Heart left ventricle (tissue), 16 donors: ENCODE measurements at regions of chr2 and their contacts with region 1.

Region 1: GRCh38 chr2:32010670-32011484 is at the start of gene MEMO1:
- DNase-seq: peak; percentile 95 to 97 (median 96)
- ATAC-seq: peak; percentile 90 to 94 (median 92)
- H3K4me3 ChIP-seq: peak within 1 kb of the TSS; percentile 28 to 98 (median 88)
- H3K27ac ChIP-seq: peak within 1 kb of the TSS; percentile 90 to 99 (median 94)
- H3K4me1 ChIP-seq: peaks cover 0 to 47% (median 26%) of the 10 kb centered on the region in 12 donors
- H3K27me3 ChIP-seq: no peaks in the 10 kb centered on the region
- CTCF ChIP-seq: no peak
- POLR2A ChIP-seq: peak in 1 of 2 donors; percentile 73
- total RNA-seq, gene MEMO1: 20.1 to 73.3 (median 53.0) TPM

Region 2: DNA sequence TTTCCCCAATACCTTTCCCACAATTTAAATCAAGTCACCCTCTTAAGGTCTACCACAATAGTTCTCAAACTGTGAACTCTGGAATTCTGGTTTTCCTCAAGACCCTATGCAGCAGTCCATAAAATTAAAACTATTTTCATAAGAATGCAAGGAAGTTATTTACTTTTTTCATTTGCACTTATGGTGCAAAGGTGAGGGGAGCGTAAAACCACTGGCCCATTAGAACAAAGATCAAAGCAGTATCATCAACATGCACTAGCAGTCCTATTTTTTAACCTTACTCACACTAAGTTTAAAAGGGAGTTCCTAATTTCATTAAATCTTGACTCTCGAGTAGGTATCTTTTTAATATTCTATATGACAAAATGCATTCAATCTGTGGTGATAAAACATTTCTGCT is 85.4 kb before region 1 on chr2:
- intact Hi-C with region 1: loop called in 1 of 10 experiments (anchors 5 kb)
- DNase-seq: no peak
- ATAC-seq: no peak
- H3K4me3 ChIP-seq: no peak overlapping the region
- H3K27ac ChIP-seq: no peak overlapping the region
- H3K4me1 ChIP-seq: peaks cover 0 to 7% (median 0%) of the 10 kb centered on the region in 12 donors
- H3K27me3 ChIP-seq: no peaks in the 10 kb centered on the region
- CTCF ChIP-seq: no peak
- POLR2A ChIP-seq: no peak

Region 3: GRCh38 chr2:31965094-31965493 is 45.8 kb before region 1 on chr2:
- intact Hi-C with region 1: no loop called
- DNase-seq: no peak
- ATAC-seq: no peak
- H3K4me3 ChIP-seq: no peak overlapping the region
- H3K27ac ChIP-seq: no peak overlapping the region
- H3K4me1 ChIP-seq: peaks cover 0 to 40% (median 5%) of the 10 kb centered on the region in 12 donors
- H3K27me3 ChIP-seq: no peaks in the 10 kb centered on the region
- CTCF ChIP-seq: no peak
- POLR2A ChIP-seq: no peak

Region 4: GRCh38 chr2:32063310-32064161 is 52.7 kb after region 1 on chr2 and contains the start of gene SPAST:
- intact Hi-C with region 1: loop called in 6 of 10 experiments (anchors 1 to 10 kb)
- DNase-seq: peak; percentile 97 to 99 (median 99)
- ATAC-seq: peak; percentile 97
- H3K4me3 ChIP-seq: peak within 1 kb of the TSS; percentile 65 to 94 (median 90)
- H3K27ac ChIP-seq: peak within 1 kb of the TSS; percentile 62 to 95 (median 90)
- H3K4me1 ChIP-seq: peaks cover 0 to 32% (median 13%) of the 10 kb centered on the region in 12 donors
- H3K27me3 ChIP-seq: no peaks in the 10 kb centered on the region
- CTCF ChIP-seq: peak; percentile 37 to 77 (median 56)
- POLR2A ChIP-seq: peak in 1 of 2 donors; percentile 69
- total RNA-seq, gene SPAST: 6.9 to 13.2 (median 10.2) TPM

Region 5: DNA sequence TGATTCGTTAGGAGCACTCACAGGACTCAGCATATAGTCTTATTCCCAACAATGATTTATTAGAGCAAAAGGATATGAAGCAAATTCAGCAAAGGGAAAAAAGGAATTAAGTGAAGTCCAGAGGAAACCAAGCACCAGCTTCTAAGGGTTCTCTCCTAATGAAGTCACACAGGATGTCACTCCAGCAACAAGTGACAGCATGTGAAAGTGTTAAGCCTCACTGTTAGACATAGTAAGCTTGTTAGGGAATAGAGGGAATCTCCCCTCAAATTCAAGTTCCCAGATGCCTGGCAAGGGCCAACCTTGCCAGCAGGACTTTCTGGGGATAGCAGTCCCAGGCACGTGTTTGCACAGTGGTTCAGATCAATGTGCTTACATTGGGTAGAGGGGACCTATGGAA is 150.4 kb after region 1 on chr2:
- intact Hi-C with region 1: loop called in 2 of 10 experiments (anchors 5 to 10 kb)
- DNase-seq: no peak
- ATAC-seq: no peak
- H3K4me3 ChIP-seq: no peak overlapping the region
- H3K27ac ChIP-seq: no peak overlapping the region
- H3K4me1 ChIP-seq: peaks cover 0 to 11% (median 8%) of the 10 kb centered on the region in 12 donors
- H3K27me3 ChIP-seq: no peaks in the 10 kb centered on the region
- CTCF ChIP-seq: no peak
- POLR2A ChIP-seq: no peak

Region 6: GRCh38 chr2:32356735-32357644 is 346.1 kb after region 1 on chr2 and contains the start of gene BIRC6:
- intact Hi-C with region 1: loop called in 1 of 10 experiments (anchors 5 kb)
- DNase-seq: peak; percentile 98 to 99 (median 99)
- ATAC-seq: peak; percentile 96 to 98 (median 97)
- H3K4me3 ChIP-seq: peak within 1 kb of the TSS; percentile 73 to 100 (median 95)
- H3K27ac ChIP-seq: peak within 1 kb of the TSS; percentile 85 to 98 (median 93)
- H3K4me1 ChIP-seq: peaks cover 10 to 48% (median 29%) of the 10 kb centered on the region in 12 donors
- H3K27me3 ChIP-seq: no peaks in the 10 kb centered on the region
- CTCF ChIP-seq: no peak
- POLR2A ChIP-seq: peak; percentile 29 to 89
- total RNA-seq, gene BIRC6: 36.1 to 68.0 (median 55.8) TPM

Region 7: GRCh38 chr2:33000986-33001385 is 990.1 kb after region 1 on chr2:
- intact Hi-C with region 1: no loop called
- DNase-seq: no peak
- ATAC-seq: no peak
- H3K4me3 ChIP-seq: no peak overlapping the region
- H3K27ac ChIP-seq: no peak overlapping the region
- H3K4me1 ChIP-seq: peaks cover 0 to 12% (median 0%) of the 10 kb centered on the region in 12 donors
- H3K27me3 ChIP-seq: no peaks in the 10 kb centered on the region
- CTCF ChIP-seq: no peak
- POLR2A ChIP-seq: no peak